ENCODE measurements at regions of chr15 and their contacts with region 1.

Region 1: DNA sequence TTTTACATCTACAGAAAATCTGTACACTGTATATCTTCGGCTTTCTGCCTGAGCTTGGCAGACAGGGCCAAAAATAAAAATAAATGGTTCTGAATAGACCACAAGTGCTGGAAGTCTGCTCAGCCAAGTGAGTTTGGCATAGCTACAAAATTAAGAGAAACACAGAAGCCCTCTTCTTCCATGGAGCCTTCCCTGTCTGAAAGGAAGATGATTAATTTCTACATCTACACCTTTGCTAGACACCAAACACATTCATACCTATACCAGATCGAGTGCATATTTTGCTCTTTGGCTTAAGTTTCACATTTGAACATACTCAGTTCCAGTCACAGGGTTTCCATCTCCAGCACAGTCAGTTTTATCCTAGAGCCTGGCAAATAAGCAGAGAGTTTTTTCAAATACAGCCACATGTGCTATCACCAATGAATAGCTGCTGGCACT is 224.6 kb downstream of the GREM1 start:
- DNase-seq: no peak
- H3K4me3 ChIP-seq: no peak overlapping the region
- H3K27ac ChIP-seq: no peak overlapping the region
- H3K4me1 ChIP-seq: no peaks in the 10 kb centered on the region
- H3K27me3 ChIP-seq: no peaks in the 10 kb centered on the region
- CTCF ChIP-seq: no peak

Region 2: GRCh38 chr15:32838820-32839219 is 103.6 kb before region 1 on chr15:
- CTCF ChIA-PET with region 1: interaction called, 4 read pairs
- dilution Hi-C with region 1: loop called (anchors 5 kb)
- in situ Hi-C with region 1: no loop called
- intact Hi-C with region 1: no loop called
- DNase-seq: no peak
- H3K4me3 ChIP-seq: no peak overlapping the region
- H3K27ac ChIP-seq: no peak overlapping the region
- H3K4me1 ChIP-seq: no peaks in the 10 kb centered on the region
- H3K27me3 ChIP-seq: no peaks in the 10 kb centered on the region
- CTCF ChIP-seq: no peak

Region 3: GRCh38 chr15:32867313-32867626 is 75.2 kb before region 1 on chr15:
- CTCF ChIA-PET with region 1: no interaction called
- dilution Hi-C with region 1: loop called (anchors 5 kb)
- in situ Hi-C with region 1: no loop called
- intact Hi-C with region 1: no loop called
- DNase-seq: peak; percentile 69
- H3K4me3 ChIP-seq: no peak overlapping the region
- H3K27ac ChIP-seq: no peak overlapping the region
- H3K4me1 ChIP-seq: peaks cover 8% of the 10 kb centered on the region
- H3K27me3 ChIP-seq: no peaks in the 10 kb centered on the region
- CTCF ChIP-seq: no peak

Region 4: DNA sequence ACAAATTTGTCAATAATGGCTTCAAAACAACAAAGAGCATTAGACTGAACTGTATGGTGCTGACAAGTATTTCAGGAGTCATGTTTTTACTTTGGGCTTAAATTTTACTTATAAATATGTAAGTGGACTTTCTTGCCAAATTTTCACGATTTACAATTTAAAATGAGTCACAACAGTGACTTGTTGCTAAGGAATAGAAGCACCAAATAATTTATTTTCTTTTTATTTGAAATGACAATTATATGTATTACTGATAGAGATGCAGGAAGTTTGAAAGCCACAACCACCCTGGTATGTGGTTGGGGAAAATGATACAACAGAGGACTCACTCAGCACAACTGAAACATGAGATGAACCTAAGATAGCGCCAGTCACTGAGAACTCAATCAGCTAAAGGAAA is 161.8 kb after region 1 on chr15:
- CTCF ChIA-PET with region 1: no interaction called
- dilution Hi-C with region 1: no loop called
- in situ Hi-C with region 1: no loop called
- intact Hi-C with region 1: no loop called
- DNase-seq: peak; percentile 81
- H3K4me3 ChIP-seq: no peak overlapping the region
- H3K27ac ChIP-seq: no peak overlapping the region
- H3K4me1 ChIP-seq: peaks cover 6% of the 10 kb centered on the region
- H3K27me3 ChIP-seq: no peaks in the 10 kb centered on the region
- CTCF ChIP-seq: no peak

Measured in mammary epithelial cell (primary cell).